Caco-2 (cell line): ENCODE measurements at regions of chr14 and their contacts with region 1.

Region 1: GRCh38 chr14:23294734-23295561 is 7.7 kb downstream of the PPP1R3E start:
- DNase-seq: peak in 1 of 2 experiments; percentile 59
- H3K4me3 ChIP-seq: no peak overlapping the region
- H3K4me3 Mint-ChIP-seq: no peak overlapping the region
- H3K27ac Mint-ChIP-seq: no peak overlapping the region
- H3K4me1 ChIP-seq: peaks cover 8% of the 10 kb centered on the region; the same call in 1 of the 2 replicates
- H3K4me1 Mint-ChIP-seq: no peaks in the 10 kb centered on the region
- H3K27me3 ChIP-seq: no peaks in the 10 kb centered on the region
- H3K27me3 Mint-ChIP-seq: no peaks in the 10 kb centered on the region
- CTCF ChIP-seq: peak; percentile 80 to 85

Region 2: DNA sequence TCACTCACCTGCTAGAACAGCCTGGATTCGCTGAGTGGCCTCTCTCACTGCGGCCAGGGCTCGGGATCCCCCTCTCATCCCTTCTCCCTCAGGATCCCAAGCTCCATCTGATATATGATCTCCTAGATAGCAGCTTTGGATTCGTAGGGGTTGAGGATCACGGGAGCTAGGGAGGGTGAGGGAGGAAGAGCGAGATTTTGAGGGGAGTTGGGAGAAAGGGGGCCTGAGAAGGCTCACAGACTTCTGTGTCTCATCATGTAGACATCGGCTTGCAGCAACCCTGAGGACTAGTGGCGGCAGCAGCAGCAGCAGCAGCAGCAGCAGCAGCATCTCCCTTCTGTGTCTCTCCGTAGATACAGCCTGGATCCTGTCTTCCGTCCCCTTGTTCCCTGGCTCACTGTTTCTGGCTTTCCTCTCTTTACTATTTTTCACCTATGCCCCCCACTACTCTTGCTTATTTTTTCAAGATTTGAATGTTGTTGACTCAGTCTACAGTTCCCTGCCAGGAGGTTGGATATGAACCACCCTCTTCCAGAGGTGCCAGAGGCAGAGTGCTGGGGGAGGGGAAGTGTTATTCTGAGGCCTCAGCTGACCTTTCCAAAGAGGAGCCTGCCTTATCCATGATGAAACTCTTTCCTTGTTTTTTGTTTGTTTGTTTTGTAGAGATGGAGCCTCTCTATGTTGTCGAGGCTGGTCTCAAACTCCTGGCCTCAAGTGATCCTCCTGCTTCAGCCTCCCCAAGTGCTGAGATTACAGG is 190.2 kb before region 1 on chr14 and contains the start of gene CIROP:
- CTCF ChIA-PET with region 1: no interaction called
- POLR2A ChIA-PET with region 1: no interaction called
- intact Hi-C with region 1: loop called (anchors 5 kb)
- DNase-seq: no peak
- H3K4me3 ChIP-seq: no peak within 1 kb of the TSS
- H3K4me3 Mint-ChIP-seq: no peak within 1 kb of the TSS
- H3K27ac Mint-ChIP-seq: no peak within 1 kb of the TSS
- H3K4me1 ChIP-seq: peaks cover 6% of the 10 kb centered on the region; the same call in 1 of the 2 replicates
- H3K4me1 Mint-ChIP-seq: peaks cover 15% of the 10 kb centered on the region
- H3K27me3 ChIP-seq: no peaks in the 10 kb centered on the region
- H3K27me3 Mint-ChIP-seq: no peaks in the 10 kb centered on the region
- CTCF ChIP-seq: no peak
- total RNA-seq, gene CIROP: not detected in 2 replicates